Activated CD4-positive, alpha-beta T cell treated with anti-CD3 and anti-CD28 coated beads, Interleukin-2, amount 10 ng/mL, durations not matched to agents 24 days and 14 days (primary cell): ENCODE measurements at regions of chr1 and their contacts with region 1.

Region 1: DNA sequence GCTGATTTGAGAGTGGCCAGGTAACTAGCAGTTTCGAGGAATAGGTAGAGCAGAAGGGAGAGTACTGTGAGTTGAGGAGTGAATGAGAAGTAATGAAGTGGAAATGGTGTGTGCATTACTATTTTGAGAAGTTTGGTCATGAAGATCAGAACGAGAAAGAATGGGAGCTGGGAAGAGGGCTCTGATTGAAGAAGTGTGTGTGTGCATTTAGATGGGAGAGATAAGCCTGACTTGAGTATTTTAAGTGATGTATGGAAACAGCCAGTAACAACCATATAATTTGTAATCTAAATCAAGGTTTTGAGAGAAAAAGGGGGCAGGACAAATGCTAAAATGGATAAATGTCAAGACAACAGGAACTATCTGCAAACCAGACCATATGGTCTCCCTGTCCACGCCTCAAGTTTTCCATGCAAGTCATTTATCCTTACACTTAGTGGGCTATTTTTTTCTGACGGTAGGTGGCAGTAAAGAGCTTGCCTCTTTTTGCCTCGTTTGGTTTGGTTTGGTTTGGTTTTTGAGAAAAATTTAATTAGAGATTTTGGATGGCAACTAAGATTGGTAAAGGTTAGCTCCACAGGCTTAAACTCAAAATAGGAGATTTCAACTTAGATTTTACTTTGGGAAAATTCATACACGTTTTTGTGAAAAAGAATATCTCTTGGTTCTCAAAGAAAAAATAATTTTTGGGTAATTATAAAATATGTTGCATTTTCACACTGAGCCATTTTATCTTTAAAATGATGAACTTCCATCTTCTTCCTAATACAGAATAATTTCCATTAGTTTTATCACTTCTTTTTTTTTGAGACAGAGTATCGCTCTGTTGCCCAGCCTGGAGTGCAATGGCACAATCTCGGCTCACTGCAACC is 9.5 kb upstream of the B3GALNT2 start:
- DNase-seq: peak; percentile 88
- H3K4me3 Mint-ChIP-seq: no peak overlapping the region
- H3K27ac Mint-ChIP-seq: no peak overlapping the region
- H3K4me1 Mint-ChIP-seq: peaks cover 8% of the 10 kb centered on the region
- H3K27me3 Mint-ChIP-seq: peaks cover 24% of the 10 kb centered on the region

Region 2: DNA sequence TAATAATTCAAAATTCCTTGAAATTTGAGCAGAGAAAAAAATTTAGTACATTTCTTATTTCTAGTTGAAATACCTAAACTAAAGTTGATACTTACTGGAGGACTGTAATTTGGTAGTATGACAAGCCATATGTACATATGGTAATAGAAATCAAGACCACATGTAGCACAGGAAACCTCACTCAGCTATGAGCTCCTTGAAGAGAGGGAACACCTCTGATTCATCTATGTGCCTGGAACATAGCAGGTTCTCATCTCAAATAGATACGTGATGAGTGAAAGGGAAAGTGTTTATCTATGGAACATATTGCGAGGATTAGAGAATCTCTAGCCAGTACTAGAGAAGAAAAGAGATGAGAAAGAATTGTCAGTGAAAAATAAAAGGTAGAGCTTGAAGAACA is 183.8 kb after region 1 on chr1:
- intact Hi-C with region 1: loop called (anchors 5 kb)
- DNase-seq: no peak
- H3K4me3 Mint-ChIP-seq: peak overlapping the region; percentile 15
- H3K27ac Mint-ChIP-seq: peak overlapping the region; percentile 82
- H3K4me1 Mint-ChIP-seq: peaks cover 13% of the 10 kb centered on the region
- H3K27me3 Mint-ChIP-seq: no peaks in the 10 kb centered on the region

Region 3: GRCh38 chr1:235739124-235739523 is 225.4 kb after region 1 on chr1:
- intact Hi-C with region 1: loop called (anchors 5 kb)
- DNase-seq: no peak
- H3K4me3 Mint-ChIP-seq: no peak overlapping the region
- H3K27ac Mint-ChIP-seq: no peak overlapping the region
- H3K4me1 Mint-ChIP-seq: peaks cover 4% of the 10 kb centered on the region
- H3K27me3 Mint-ChIP-seq: no peaks in the 10 kb centered on the region

Region 4: GRCh38 chr1:235784950-235785349 is 271.2 kb after region 1 on chr1:
- intact Hi-C with region 1: loop called (anchors 2 kb)
- DNase-seq: no peak
- H3K4me3 Mint-ChIP-seq: no peak overlapping the region
- H3K27ac Mint-ChIP-seq: no peak overlapping the region
- H3K4me1 Mint-ChIP-seq: no peaks in the 10 kb centered on the region
- H3K27me3 Mint-ChIP-seq: no peaks in the 10 kb centered on the region

Region 5: GRCh38 chr1:235843461-235843961 is 329.8 kb after region 1 on chr1:
- intact Hi-C with region 1: loop called (anchors 10 kb)
- DNase-seq: peak; percentile 56
- H3K4me3 Mint-ChIP-seq: no peak overlapping the region
- H3K27ac Mint-ChIP-seq: no peak overlapping the region
- H3K4me1 Mint-ChIP-seq: peaks cover 61% of the 10 kb centered on the region
- H3K27me3 Mint-ChIP-seq: no peaks in the 10 kb centered on the region

Region 6: GRCh38 chr1:235971571-235972310 is 458.0 kb after region 1 on chr1:
- intact Hi-C with region 1: loop called (anchors 2 kb)
- DNase-seq: peak; percentile 96
- H3K4me3 Mint-ChIP-seq: peak overlapping the region; percentile 77
- H3K27ac Mint-ChIP-seq: peak overlapping the region; percentile 85
- H3K4me1 Mint-ChIP-seq: peaks cover 16% of the 10 kb centered on the region
- H3K27me3 Mint-ChIP-seq: peaks cover 6% of the 10 kb centered on the region